Spleen (tissue), 13 donors: ENCODE measurements at regions of chr6 and their contacts with region 1.

Region 1: GRCh38 chr6:142952614-142953013 is 7.6 kb upstream of the HIVEP2 start:
- DNase-seq: peak; percentile 79
- H3K4me3 ChIP-seq: no peak overlapping the region
- H3K27ac ChIP-seq: no peak overlapping the region
- H3K4me1 ChIP-seq: peaks cover 8 to 37% (median 24%) of the 10 kb centered on the region in 6 donors
- H3K27me3 ChIP-seq: no peaks in the 10 kb centered on the region
- CTCF ChIP-seq: no peak
- POLR2A ChIP-seq: no peak

Region 2: DNA sequence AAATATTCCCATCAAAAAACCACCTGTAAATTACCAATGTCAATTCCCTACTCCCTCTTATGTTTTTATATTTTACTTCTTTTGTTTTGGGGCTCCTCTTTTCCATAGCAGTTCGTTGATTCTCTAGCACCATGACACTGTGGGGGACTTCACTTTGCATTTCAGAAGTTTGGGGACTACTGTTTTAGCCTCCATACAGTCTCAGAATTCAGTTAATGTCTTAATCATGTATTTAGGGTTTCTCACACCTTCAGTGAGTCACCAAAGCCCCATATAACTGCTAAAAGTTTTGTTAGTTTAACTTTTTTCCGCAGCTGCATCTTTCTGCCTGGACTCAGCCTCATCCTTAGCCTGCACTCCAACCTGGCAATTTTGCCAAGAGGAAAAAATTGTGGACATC is 87.4 kb after region 1 on chr6:
- intact Hi-C with region 1: loop called (anchors 10 kb)
- DNase-seq: no peak
- H3K4me3 ChIP-seq: no peak overlapping the region
- H3K27ac ChIP-seq: no peak overlapping the region
- H3K4me1 ChIP-seq: no peaks in the 10 kb centered on the region
- H3K27me3 ChIP-seq: peaks cover 0 to 7% (median 0%) of the 10 kb centered on the region in 7 donors
- CTCF ChIP-seq: no peak
- POLR2A ChIP-seq: no peak

Region 3: DNA sequence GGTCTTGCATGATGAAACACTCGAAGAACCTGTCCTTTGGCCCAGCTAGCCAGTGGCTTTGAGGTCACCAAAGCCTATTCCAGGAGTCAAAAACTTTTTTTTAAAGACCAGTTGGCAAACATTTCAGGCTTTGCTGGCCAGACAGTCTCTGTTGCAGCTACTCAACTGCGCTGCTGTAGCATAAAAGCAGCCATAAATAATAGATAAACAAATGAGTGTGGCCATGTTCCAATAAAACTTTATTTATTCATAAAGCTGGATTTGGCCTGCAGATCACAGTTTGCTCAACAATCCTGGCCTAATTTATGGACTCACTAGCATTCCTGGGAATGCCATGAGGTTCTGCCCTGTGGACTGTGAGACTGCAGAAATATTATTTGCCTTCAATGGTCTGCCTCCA is 821.7 kb after region 1 on chr6:
- intact Hi-C with region 1: no loop called
- DNase-seq: no peak
- H3K4me3 ChIP-seq: no peak overlapping the region
- H3K27ac ChIP-seq: peak overlapping the region in 1 of 8 donors; percentile 29
- H3K4me1 ChIP-seq: peaks cover 0 to 14% (median 0%) of the 10 kb centered on the region in 6 donors
- H3K27me3 ChIP-seq: no peaks in the 10 kb centered on the region
- CTCF ChIP-seq: no peak
- POLR2A ChIP-seq: no peak